Upper lobe of right lung (tissue), 1 donor: ENCODE measurements at regions of chr1 and their contacts with region 1.

Region 1: DNA sequence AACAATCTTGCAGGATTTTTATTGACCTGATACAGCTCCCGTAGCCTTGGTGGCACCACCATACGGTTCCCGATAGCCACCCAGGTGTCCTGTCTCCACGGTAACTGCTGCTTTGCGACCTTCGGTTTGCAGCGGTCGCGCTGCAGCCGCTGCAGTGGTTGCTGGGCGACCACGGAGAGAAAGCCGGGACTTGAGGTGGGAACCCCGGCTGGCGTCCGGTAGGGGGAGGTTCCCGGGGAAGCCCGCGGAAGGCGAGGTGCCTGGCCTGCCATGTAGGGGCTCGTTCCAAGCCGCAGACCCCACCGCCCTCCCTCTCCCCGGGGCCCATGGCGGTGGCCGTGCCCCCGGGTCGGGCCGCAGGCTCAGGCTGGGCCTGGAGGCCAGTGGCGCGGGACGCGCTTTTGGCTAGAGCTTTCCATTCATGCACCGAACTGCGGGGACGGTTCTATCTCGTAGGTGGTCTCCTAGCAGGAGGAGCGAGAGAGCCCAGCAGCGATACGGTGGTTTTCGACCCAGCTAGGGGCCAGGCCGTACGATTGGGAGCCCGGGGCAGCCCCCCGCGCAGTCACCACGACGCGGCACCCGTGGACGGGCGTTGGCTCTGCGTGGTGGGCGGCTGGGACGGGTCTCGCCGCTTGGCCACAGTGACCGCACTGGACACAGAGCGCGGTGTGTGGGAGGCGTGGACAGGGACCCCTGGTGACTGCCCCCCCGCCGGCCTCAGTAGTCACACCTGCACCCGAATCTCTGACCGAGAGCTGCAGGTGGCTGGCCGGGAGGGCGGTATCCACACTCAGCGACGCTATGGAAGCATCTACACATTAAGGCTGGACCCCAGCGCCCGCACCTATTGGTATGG is at the start of gene KLHDC9:
- DNase-seq: peak; percentile 92
- ATAC-seq: peak; percentile 89
- H3K4me3 ChIP-seq: peak within 1 kb of the TSS; percentile 65
- H3K27ac ChIP-seq: peak within 1 kb of the TSS; percentile 66
- H3K4me1 ChIP-seq: peaks cover 19% of the 10 kb centered on the region
- H3K27me3 ChIP-seq: no peaks in the 10 kb centered on the region
- CTCF ChIP-seq: peak; percentile 17
- total RNA-seq, gene KLHDC9: 3.2 TPM

Region 2: DNA sequence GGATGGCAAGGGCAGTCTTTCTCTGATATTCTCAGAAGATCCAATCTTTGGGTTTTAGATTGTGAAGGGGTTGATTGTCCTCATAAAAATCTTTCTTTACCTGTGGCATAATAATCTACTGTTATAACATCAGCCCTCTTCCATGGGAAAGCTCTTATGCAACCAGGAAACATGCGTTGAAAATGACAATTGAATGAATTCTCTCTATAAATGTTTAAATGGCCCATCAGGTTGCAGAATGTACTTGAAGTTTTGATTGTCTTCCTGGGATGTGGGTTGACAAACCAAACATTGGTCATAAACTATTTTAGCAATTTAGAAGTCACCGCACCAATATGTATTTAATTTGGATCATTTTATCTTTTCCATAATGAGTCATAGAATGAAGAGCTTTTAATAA is 181.8 kb before region 1 on chr1:
- intact Hi-C with region 1: no loop called
- DNase-seq: no peak
- ATAC-seq: no peak
- H3K4me3 ChIP-seq: no peak overlapping the region
- H3K27ac ChIP-seq: no peak overlapping the region
- H3K4me1 ChIP-seq: peaks cover 6% of the 10 kb centered on the region
- H3K27me3 ChIP-seq: no peaks in the 10 kb centered on the region
- CTCF ChIP-seq: no peak

Region 3: GRCh38 chr1:160993544-160994193 is 104.8 kb before region 1 on chr1:
- intact Hi-C with region 1: loop called (anchors 5 kb)
- DNase-seq: peak; percentile 28
- ATAC-seq: peak; percentile 59
- H3K4me3 ChIP-seq: no peak overlapping the region
- H3K27ac ChIP-seq: no peak overlapping the region
- H3K4me1 ChIP-seq: peaks cover 10% of the 10 kb centered on the region
- H3K27me3 ChIP-seq: no peaks in the 10 kb centered on the region
- CTCF ChIP-seq: peak; percentile 38